CD8-positive, alpha-beta memory T cell (primary cell): ENCODE measurements at regions of chr11 and their contacts with region 1.

Region 1: GRCh38 chr11:95067039-95067840 is 521 bp downstream of the SRSF8 start:
- DNase-seq: peak; percentile 65 to 84 (median 76)
- H3K4me3 ChIP-seq: peak overlapping the region; percentile 78
- H3K4me3 Mint-ChIP-seq: peak overlapping the region; percentile 91 to 100 (median 97)
- H3K27ac ChIP-seq: peak overlapping the region; percentile 96
- H3K27ac Mint-ChIP-seq: peak overlapping the region; percentile 85 to 99 (median 99)
- H3K4me1 ChIP-seq: peaks cover 29% of the 10 kb centered on the region
- H3K4me1 Mint-ChIP-seq: peaks cover 27 to 37% (median 33%) of the 10 kb centered on the region in 3 donors
- H3K27me3 ChIP-seq: no peaks in the 10 kb centered on the region
- H3K27me3 Mint-ChIP-seq: no peaks in the 10 kb centered on the region

Region 2: DNA sequence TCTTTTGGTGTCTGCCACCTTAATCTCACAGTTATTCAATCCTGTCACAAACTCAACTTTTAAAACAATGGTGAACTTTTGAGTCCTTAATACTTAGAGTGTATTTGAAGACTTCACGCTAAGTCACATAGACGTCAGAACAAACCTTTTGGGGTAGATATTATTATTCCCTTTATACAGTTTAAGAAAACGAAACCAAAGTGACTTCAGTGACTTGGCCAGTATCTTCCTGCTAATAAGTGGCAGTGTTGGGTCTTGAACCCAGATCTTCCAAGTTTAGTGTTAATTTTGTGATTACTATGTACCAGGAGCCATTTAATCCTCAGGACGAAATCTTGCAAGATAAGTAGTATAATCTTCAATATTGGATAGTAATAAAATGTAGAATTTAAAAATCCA is 1405.1 kb before region 1 on chr11:
- CTCF ChIA-PET with region 1: no interaction called
- POLR2A ChIA-PET with region 1: interaction called, 10 read pairs
- DNase-seq: no peak
- H3K4me3 ChIP-seq: peak overlapping the region; percentile 80
- H3K4me3 Mint-ChIP-seq: peak overlapping the region; percentile 81 to 95 (median 89)
- H3K27ac ChIP-seq: peak overlapping the region; percentile 85
- H3K27ac Mint-ChIP-seq: peak overlapping the region; percentile 83 to 97 (median 94)
- H3K4me1 ChIP-seq: peaks cover 8% of the 10 kb centered on the region
- H3K4me1 Mint-ChIP-seq: peaks cover 24 to 54% (median 48%) of the 10 kb centered on the region in 3 donors
- H3K27me3 ChIP-seq: no peaks in the 10 kb centered on the region
- H3K27me3 Mint-ChIP-seq: no peaks in the 10 kb centered on the region

Region 3: DNA sequence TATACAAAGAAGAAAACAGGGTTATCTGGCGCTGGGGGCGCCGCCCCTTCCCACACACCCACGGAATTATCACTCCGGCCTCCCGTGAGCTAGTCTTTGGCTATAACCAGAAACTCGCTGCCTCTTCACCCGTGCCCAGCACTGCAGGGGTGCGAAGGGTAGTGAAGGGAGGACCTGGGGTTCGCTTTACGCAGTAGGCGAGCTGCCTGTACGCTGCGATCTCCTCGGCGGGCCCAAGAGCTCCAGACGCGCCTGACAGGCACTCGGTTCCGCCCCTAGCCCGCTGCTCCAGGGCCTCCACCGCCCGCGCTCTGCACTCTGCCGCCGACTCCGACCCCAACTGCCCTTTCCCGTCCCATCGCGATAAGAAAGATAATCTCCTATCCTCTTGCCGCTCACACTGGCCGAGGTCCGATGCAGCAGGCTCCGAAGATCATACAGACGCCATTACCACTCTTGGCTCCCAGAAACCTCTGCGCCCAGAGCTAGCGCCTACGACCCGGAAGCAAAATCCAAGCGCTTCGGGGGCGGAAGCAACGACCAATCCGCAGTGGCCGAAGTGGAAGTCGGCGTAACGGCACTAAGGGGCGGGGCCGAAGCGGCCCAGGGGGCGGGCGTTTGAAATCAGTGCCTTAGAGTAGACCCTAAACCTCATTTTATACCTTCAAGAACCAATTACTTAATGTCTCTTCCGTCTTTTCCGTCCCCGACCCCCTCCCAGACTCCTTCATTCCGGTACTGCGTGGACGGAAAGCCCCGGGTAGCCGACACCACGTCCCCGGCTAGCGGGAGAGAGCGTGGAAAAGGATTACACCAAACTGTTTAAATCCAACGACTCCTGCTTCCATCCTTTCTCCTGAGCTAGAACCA is 93.9 kb before region 1 on chr11 and contains the starts of genes CWC15 and KDM4D:
- CTCF ChIA-PET with region 1: interaction called, 9 read pairs
- POLR2A ChIA-PET with region 1: interaction called, 27 read pairs
- DNase-seq: peak; percentile 90 to 97 (median 91)
- H3K4me3 ChIP-seq: peak within 1 kb of the TSS; percentile 88
- H3K4me3 Mint-ChIP-seq: peak within 1 kb of the TSS; percentile 91 to 99 (median 96)
- H3K27ac ChIP-seq: peak within 1 kb of the TSS; percentile 82
- H3K27ac Mint-ChIP-seq: peak within 1 kb of the TSS; percentile 87 to 100 (median 97)
- H3K4me1 ChIP-seq: peaks cover 11% of the 10 kb centered on the region
- H3K4me1 Mint-ChIP-seq: peaks cover 24 to 55% (median 52%) of the 10 kb centered on the region in 3 donors
- H3K27me3 ChIP-seq: no peaks in the 10 kb centered on the region
- H3K27me3 Mint-ChIP-seq: no peaks in the 10 kb centered on the region
- total RNA-seq, gene CWC15: 96.6 to 100 TPM
- total RNA-seq, gene KDM4D: 1.6 to 1.8 TPM

Region 4: DNA sequence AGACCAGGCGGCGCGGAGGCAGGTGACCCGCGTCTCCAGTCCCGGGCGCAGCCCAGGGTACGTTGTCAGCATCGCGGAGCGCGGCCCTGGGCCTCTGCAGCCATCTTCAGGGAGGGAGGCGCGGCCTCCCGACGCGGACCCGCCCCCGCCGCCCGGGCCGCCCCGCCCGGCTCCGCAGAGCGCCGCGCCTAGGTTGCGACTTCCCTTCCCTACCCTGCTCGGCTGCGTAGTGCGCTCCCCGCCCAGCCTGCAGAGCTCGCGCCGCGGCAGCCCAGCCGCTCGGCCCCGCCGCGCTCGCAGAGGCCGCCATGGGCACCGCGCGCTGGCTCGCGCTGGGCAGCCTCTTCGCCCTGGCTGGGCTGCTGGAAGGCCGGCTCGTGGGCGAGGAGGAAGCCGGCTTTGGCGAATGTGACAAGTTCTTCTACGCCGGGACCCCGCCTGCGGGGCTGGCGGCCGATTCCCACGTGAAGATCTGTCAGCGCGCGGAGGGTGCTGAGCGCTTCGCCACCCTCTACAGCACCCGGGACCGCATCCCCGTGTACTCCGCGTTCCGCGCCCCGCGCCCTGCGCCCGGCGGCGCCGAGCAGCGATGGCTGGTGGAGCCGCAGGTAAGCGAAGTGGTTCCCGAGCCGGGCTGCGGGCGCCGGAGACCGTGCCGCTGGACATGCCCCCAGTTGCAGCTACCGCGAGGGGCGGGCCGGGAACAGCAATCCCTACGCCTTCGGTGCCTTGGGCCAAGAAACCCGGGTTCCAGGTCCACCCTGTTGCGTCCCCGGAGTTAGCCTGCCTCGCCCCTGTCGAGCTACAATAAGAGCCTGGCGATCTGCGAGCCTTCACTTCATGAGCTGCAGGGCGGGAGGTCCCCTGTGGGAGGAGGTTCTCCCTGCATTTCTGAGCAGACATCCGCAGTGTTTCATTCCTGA is 22.6 kb after region 1 on chr11 and contains the start of gene ENDOD1:
- CTCF ChIA-PET with region 1: interaction called, 116 read pairs
- POLR2A ChIA-PET with region 1: interaction called, 164 read pairs
- DNase-seq: peak; percentile 75 to 89 (median 84)
- H3K4me3 ChIP-seq: peak within 1 kb of the TSS; percentile 70
- H3K4me3 Mint-ChIP-seq: peak within 1 kb of the TSS; percentile 91 to 98 (median 93)
- H3K27ac ChIP-seq: peak within 1 kb of the TSS; percentile 78
- H3K27ac Mint-ChIP-seq: peak within 1 kb of the TSS; percentile 92 to 99 (median 98)
- H3K4me1 ChIP-seq: peaks cover 33% of the 10 kb centered on the region
- H3K4me1 Mint-ChIP-seq: peaks cover 46 to 58% (median 48%) of the 10 kb centered on the region in 3 donors
- H3K27me3 ChIP-seq: no peaks in the 10 kb centered on the region
- H3K27me3 Mint-ChIP-seq: no peaks in the 10 kb centered on the region
- total RNA-seq, gene ENDOD1: 29.6 to 30.1 TPM

Region 5: GRCh38 chr11:95231127-95231880 is 164.1 kb after region 1 on chr11 and contains the start of gene SESN3:
- CTCF ChIA-PET with region 1: interaction called, 6 read pairs
- POLR2A ChIA-PET with region 1: interaction called, 22 read pairs
- DNase-seq: peak; percentile 98 to 99 (median 99)
- H3K4me3 ChIP-seq: peak within 1 kb of the TSS; percentile 68
- H3K4me3 Mint-ChIP-seq: peak within 1 kb of the TSS in 6 of 7 donors; percentile 90 to 97 (median 94)
- H3K27ac ChIP-seq: peak within 1 kb of the TSS; percentile 60
- H3K27ac Mint-ChIP-seq: peak within 1 kb of the TSS; percentile 83 to 98 (median 89)
- H3K4me1 ChIP-seq: peaks cover 24% of the 10 kb centered on the region
- H3K4me1 Mint-ChIP-seq: peaks cover 41 to 50% (median 49%) of the 10 kb centered on the region in 3 donors
- H3K27me3 ChIP-seq: no peaks in the 10 kb centered on the region
- H3K27me3 Mint-ChIP-seq: no peaks in the 10 kb centered on the region
- total RNA-seq, gene SESN3: 18.8 to 19.7 TPM